ENCODE measurements at regions of chr20 and their contacts with region 1.

Region 1: DNA sequence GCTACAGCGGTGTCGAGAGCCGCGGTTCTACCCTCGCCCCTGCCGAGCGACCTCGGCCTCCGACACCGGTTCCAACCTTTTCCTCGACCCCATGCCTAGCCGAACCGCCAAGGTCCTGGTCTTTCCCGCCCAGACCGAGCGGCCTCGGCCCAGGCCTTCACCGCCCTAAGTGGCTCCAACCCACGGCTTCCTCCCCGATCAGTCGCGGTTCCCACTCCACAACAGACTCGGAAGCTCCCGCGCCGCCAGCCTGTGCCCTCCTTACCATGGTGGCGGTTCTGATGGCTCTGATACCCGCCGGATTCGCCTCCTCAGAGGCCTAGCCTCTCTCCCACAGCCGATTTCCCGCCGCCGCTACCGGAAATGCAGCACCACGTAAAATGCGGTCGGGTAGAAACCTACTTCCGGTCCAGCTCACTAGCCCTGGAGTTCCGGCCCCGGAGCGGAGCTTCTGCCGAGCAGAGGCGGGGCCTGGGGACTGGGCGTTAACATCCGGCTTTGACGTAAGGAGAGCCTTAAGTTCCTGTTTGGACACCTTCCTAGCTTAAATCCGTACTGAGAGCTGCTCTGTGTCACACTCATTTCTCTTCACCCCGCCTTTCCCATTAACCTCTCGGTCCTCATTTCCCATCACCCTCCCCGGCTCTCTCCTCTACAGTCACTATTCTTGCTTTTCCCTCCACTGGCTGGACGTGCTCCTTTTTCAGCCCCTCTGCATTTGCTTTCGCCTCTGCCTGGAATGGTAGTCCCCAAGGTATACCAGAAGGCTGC is at the start of gene SNRPB:
- DNase-seq: peak; percentile 96 to 98
- H3K4me3 ChIP-seq: peak within 1 kb of the TSS; percentile 65 to 77
- H3K27ac ChIP-seq: peak within 1 kb of the TSS; percentile 91 to 94
- H3K4me1 ChIP-seq: peaks cover 0 to 27% (median 22%) of the 10 kb centered on the region in 4 donors
- H3K27me3 ChIP-seq: no peaks in the 10 kb centered on the region
- CTCF ChIP-seq: no peak

Region 2: DNA sequence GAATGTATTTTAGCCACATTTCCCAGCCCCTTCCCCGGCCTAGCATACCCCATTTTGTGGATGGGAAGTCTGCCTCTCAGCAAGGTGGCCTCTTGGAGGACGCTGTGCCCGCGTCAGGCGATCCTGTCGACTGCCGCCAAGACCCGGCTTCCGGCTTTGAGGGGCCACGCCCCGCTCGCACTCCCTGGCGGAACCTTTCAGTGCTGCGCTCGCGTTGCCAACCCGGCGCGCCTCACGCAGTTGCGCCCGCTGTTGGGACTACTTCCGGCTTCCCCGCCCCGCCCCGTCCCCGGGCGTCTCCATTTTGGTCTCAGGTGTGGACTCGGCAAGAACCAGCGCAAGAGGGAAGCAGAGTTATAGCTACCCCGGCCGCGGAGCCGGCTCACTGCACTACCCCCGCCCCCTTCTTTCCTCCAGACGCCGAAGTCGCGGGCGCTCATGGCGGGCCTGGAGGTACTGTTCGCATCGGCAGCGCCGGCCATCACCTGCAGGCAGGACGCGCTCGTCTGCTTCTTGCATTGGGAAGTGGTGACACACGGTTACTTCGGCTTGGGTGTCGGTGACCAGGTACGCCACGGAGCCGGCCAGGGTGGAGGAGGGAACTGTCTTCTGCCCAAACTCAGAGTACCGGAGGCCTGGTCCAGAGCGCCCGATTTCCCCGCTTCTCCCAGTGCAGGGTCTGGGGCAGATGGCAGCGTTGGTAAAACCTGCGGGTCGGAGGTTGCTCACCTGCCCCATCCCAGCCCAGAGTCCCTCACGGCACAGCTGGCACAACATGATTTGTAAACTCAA is 1352.1 kb before region 1 on chr20 and contains the start of gene PSMF1:
- intact Hi-C with region 1: loop called (anchors 10 kb)
- DNase-seq: peak; percentile 93 to 97
- H3K4me3 ChIP-seq: peak within 1 kb of the TSS; percentile 77
- H3K27ac ChIP-seq: peak within 1 kb of the TSS; percentile 71 to 77
- H3K4me1 ChIP-seq: peaks cover 0 to 54% (median 39%) of the 10 kb centered on the region in 4 donors
- H3K27me3 ChIP-seq: no peaks in the 10 kb centered on the region
- CTCF ChIP-seq: peak in 1 of 2 experiments; percentile 13

Region 3: GRCh38 chr20:2330090-2330695 is 140.4 kb before region 1 on chr20:
- intact Hi-C with region 1: no loop called
- DNase-seq: peak in 1 of 2 donors; percentile 4
- H3K4me3 ChIP-seq: no peak overlapping the region
- H3K27ac ChIP-seq: no peak overlapping the region
- H3K4me1 ChIP-seq: no peaks in the 10 kb centered on the region
- H3K27me3 ChIP-seq: peaks cover 0 to 6% of the 10 kb centered on the region in 2 donors
- CTCF ChIP-seq: no peak

Region 4: DNA sequence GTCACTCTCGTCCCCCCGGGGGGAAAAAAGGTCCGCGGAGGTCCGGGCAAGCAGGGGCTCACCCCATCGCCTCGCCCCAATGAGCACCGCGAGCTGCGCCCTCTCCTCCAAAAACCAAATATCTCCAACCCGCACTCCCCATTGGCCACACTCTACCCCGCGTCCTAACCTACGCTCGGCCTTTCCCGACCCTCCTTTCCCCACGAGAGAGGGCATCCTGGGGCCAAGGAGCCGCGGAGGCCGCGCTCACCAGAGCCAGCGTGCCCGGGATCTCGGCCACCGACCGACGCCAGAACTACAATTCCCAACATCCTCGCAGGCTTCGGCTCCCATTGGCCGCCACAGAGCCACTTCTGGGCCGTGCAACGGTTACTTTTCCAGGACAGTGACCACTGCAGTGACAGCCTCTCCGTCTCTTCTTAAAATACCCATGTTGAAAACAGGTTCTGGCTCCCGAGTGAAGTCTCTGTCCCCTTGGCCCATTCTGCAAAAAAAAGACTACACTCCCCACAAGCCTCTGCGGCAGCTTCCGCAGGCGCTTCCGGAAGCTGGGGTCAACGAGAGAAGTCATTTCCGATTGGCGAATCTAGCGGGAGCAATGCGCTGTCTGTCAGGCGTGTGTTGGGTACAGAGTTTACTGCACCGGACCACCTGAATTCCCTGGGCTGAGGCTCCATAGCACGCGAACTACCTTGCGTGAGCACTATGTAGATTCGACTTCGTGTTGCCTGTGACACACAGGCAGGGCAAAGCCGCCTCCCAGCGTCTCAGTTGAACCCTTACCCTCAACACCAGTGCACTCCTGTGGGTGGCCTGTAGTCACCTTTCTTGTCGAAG is 38.2 kb after region 1 on chr20 and contains the start of gene ZNF343:
- intact Hi-C with region 1: no loop called
- DNase-seq: peak; percentile 80 to 87
- H3K4me3 ChIP-seq: peak within 1 kb of the TSS; percentile 73 to 81
- H3K27ac ChIP-seq: peak within 1 kb of the TSS; percentile 88
- H3K4me1 ChIP-seq: peaks cover 0 to 16% (median 9%) of the 10 kb centered on the region in 4 donors
- H3K27me3 ChIP-seq: no peaks in the 10 kb centered on the region
- CTCF ChIP-seq: no peak

Region 5: GRCh38 chr20:2523919-2524708 is 53.5 kb after region 1 on chr20:
- intact Hi-C with region 1: loop called (anchors 5 kb)
- DNase-seq: peak; percentile 75 to 92
- H3K4me3 ChIP-seq: peak overlapping the region; percentile 63 to 85
- H3K27ac ChIP-seq: peak overlapping the region; percentile 82 to 93
- H3K4me1 ChIP-seq: peaks cover 0 to 7% (median 4%) of the 10 kb centered on the region in 4 donors
- H3K27me3 ChIP-seq: no peaks in the 10 kb centered on the region
- CTCF ChIP-seq: peak; percentile 91 to 94

Region 6: DNA sequence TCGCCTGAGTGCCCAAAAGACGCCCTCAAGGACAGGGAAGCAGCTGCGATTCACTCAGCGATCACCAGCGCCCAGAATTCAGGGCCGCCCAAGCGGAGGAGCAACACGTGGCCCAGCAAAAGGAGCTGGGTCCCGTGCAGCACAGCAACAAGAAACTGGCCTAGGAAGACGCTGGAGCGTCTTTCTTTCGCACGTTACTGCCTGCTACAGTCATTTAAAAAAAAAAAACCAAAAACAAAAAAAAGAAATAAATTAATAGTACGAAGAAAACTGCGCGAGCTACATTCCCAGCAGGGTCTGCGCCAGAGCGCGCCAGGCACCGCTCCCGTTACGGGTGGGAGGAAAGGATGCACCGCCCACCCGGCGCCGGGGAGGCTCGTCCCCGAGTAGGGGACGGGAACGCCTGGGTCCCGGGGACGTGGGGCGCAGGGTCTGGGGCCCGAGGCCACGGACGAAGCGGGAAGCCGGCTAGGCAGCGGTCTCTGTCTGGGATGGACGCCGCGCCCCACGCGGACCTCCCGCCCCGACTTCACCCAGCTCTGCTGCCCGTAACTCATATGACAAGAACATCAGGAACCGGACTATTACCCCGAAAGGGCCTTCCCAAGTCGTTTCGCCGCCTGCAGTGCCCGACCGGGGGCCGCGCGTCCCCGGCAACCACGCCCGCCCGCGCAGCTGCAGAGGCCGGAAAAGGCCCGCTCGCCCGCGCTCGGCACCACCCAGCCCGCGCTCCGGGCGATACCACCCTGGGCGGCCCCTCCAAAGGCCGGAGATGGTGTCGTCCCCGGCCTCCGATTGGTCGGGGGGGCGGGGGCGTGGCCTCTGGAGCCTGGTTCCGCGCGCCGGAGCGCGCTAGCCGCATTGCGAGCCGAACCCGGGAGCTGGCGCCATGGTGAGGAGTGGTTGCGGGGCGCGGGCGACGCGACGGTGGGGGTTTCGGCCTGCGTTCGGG is 181.4 kb after region 1 on chr20 and contains the start of gene NOP56:
- intact Hi-C with region 1: loop called (anchors 10 kb)
- DNase-seq: peak; percentile 85 to 94
- H3K4me3 ChIP-seq: peak within 1 kb of the TSS; percentile 66 to 84
- H3K27ac ChIP-seq: peak within 1 kb of the TSS; percentile 82 to 89
- H3K4me1 ChIP-seq: peaks cover 0 to 21% (median 13%) of the 10 kb centered on the region in 4 donors
- H3K27me3 ChIP-seq: no peaks in the 10 kb centered on the region
- CTCF ChIP-seq: no peak

Measured in tibial artery (tissue), 4 donors.